Gastrocnemius medialis (tissue), 4 donors: ENCODE measurements at regions of chr1 and their contacts with region 1.

Region 1: GRCh38 chr1:7770997-7771822 is at the start of gene VAMP3:
- DNase-seq: peak; percentile 86
- ATAC-seq: peak; percentile 92 to 94
- H3K4me3 ChIP-seq: peak within 1 kb of the TSS; percentile 75 to 96 (median 84)
- H3K27ac ChIP-seq: peak within 1 kb of the TSS; percentile 84 to 97 (median 97)
- H3K4me1 ChIP-seq: peaks cover 6 to 11% of the 10 kb centered on the region in 2 donors
- H3K27me3 ChIP-seq: no peaks in the 10 kb centered on the region
- CTCF ChIP-seq: no peak
- POLR2A ChIP-seq: peak; percentile 72 to 81
- total RNA-seq, gene VAMP3: 63.7 to 71.2 (median 69.7) TPM

Region 2: DNA sequence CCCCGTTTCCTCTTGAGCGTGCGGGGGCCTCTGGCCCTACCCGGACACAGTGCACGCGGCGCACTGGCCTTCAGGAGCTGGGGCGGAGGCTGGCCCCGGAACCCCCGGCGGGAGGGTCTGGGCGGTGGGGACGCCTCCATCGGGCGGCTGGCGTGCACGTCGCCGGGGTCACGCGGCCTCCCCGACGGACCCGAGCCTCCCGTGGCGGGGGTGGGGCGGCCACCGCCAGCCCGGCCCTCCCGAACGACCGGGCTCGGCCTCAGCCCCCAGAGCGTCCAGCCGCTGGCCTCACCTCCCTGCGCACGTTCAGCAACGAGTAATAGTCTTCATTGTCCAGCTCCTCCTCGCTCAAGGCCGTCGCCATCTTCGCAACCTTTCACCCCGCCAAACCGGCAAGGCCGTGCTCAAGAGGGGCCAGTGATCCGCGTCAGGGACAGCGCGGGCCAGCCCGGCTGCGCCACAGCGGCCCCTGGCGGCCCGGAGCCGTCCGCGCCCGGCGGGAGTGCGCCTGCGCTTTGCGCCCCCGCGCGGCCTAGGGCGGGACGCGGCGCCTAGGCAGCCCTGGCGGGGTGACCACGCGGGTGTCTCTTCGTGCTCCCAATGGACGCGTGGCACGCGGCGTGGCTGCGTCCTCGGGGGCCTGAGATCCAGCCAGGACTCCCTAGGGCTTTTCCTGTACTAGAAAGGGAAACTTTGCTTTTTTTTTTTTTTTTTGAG is 1069.6 kb before region 1 on chr1 and contains the start of gene DNAJC11:
- in situ Hi-C with region 1: no loop called
- intact Hi-C with region 1: loop called (anchors 10 kb)
- DNase-seq: peak; percentile 77 to 87
- ATAC-seq: peak; percentile 96 to 97
- H3K4me3 ChIP-seq: peak within 1 kb of the TSS; percentile 91 to 99 (median 96)
- H3K27ac ChIP-seq: peak within 1 kb of the TSS; percentile 80 to 93 (median 88)
- H3K4me1 ChIP-seq: peaks cover 22 to 32% of the 10 kb centered on the region in 2 donors
- H3K27me3 ChIP-seq: no peaks in the 10 kb centered on the region
- CTCF ChIP-seq: peak; percentile 64 to 100 (median 99)
- POLR2A ChIP-seq: peak in 1 of 2 donors; percentile 44
- total RNA-seq, gene DNAJC11: 23.3 to 40.7 (median 30.8) TPM

Region 3: GRCh38 chr1:7680207-7680954 is 90.8 kb before region 1 on chr1:
- in situ Hi-C with region 1: no loop called
- intact Hi-C with region 1: no loop called
- DNase-seq: no peak
- ATAC-seq: peak; percentile 35 to 46
- H3K4me3 ChIP-seq: peak overlapping the region; percentile 66 to 79 (median 71)
- H3K27ac ChIP-seq: peak overlapping the region in 2 of 4 donors; percentile 27 to 51
- H3K4me1 ChIP-seq: peaks cover 3 to 4% of the 10 kb centered on the region in 2 donors
- H3K27me3 ChIP-seq: no peaks in the 10 kb centered on the region
- CTCF ChIP-seq: no peak
- POLR2A ChIP-seq: no peak

Region 4: GRCh38 chr1:7783826-7784491 is 12.7 kb after region 1 on chr1 and contains the start of gene PER3:
- in situ Hi-C with region 1: no loop called
- intact Hi-C with region 1: loop called (anchors 1 kb)
- DNase-seq: peak; percentile 93 to 98
- ATAC-seq: peak; percentile 86 to 87
- H3K4me3 ChIP-seq: peak within 1 kb of the TSS; percentile 71 to 80 (median 78)
- H3K27ac ChIP-seq: peak within 1 kb of the TSS; percentile 95 to 98 (median 98)
- H3K4me1 ChIP-seq: peaks cover 15 to 26% of the 10 kb centered on the region in 2 donors
- H3K27me3 ChIP-seq: no peaks in the 10 kb centered on the region
- CTCF ChIP-seq: peak in 2 of 5 experiments; percentile 12 to 59
- POLR2A ChIP-seq: peak; percentile 94 to 96
- total RNA-seq, gene PER3: 3.7 to 7.1 (median 5.5) TPM